Activated T-helper 2 cell treated with anti-CD3 and anti-CD28 coated beads, Interferon-gamma antibody, Interleukin-2, Interleukin-4, amounts not matched to agents 10 μg/mL and 5 μg/mL and 100 μg/mL, durations not matched to agents 14 hours and 24 hours and 36 hours (primary cell): ENCODE measurements at regions of chr5 and their contacts with region 1.

Region 1: DNA sequence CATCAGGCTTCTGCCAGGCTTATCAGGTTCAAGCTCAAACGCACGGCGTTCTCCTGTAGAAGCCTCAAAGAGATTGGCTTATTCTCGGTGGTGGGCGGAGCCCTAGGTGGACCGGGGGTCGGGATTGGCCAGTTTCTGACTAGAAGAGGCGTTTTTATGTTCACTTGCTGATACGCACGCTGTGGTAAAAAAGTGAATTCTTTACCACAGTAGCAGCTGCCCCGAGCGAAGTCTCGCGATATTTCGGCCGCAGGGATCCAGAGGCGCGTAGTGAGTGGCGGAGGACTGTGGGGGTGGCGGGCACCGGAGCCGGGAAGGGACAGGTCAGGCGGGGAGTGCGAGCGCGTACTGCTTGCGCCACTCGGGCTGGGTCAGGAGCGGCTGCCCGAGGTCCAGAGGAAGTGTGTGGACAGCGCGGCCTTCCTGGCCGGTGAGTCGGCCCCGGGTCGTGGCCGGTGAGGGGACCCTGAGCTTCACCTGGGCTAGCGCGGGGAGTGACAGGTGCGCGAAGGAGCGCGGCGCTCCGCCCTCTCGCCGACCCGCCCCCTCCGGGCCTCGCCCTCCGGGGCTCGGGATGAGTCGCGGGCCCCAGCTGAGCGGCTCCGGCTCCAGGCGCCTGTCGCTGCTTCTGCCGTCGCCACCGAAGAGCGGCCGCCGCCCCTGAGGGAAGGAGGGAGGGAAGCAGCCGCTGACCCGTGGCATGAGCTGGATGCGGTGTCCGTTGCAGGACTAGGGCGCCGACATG is at the start of gene DMXL1:
- DNase-seq: peak; percentile 97
- H3K4me3 Mint-ChIP-seq: peak within 1 kb of the TSS; percentile 98
- H3K27ac Mint-ChIP-seq: peak within 1 kb of the TSS; percentile 99
- H3K4me1 Mint-ChIP-seq: peaks cover 33% of the 10 kb centered on the region
- H3K27me3 Mint-ChIP-seq: no peaks in the 10 kb centered on the region
- total RNA-seq, gene DMXL1: 26.7 and 29.3 TPM in 2 replicates

Region 2: GRCh38 chr5:119031905-119032304 is 39.1 kb before region 1 on chr5:
- intact Hi-C with region 1: loop called (anchors 2 kb)
- DNase-seq: no peak
- H3K4me3 Mint-ChIP-seq: peak overlapping the region; percentile 3
- H3K27ac Mint-ChIP-seq: peak overlapping the region; percentile 58
- H3K4me1 Mint-ChIP-seq: peaks cover 25% of the 10 kb centered on the region
- H3K27me3 Mint-ChIP-seq: no peaks in the 10 kb centered on the region

Region 3: DNA sequence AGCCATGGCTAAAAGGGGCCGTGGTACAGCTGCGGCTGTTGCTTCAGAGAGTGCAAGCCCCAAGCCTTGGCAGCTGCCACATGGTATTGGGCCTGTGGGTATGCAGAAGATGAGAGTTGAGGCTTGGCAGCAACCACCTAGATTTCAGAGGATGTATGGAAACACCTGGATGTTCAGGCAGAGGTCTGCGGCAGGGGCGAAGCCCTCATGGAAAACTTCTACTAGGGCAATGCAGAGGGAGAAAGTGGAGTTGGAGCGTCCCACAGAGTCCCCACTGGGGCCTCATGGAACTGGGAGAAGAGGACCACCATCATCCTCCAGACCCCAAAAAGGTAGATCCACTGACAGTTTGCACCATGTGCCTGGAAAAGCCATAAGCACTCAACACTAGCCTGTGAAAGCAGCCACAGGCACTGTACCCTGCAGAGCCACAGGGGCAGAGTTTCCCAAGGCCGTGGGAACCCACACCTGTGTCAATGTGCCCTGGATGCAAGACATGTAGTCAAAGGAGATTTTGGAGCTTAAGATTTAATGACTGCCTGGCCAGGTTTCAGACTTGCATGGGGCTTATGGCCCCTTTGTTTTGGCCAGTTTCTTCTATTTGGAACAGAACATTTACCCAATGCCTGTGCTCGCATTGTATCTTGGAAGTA is 65.8 kb after region 1 on chr5:
- intact Hi-C with region 1: no loop called
- DNase-seq: no peak
- H3K4me3 Mint-ChIP-seq: no peak overlapping the region
- H3K27ac Mint-ChIP-seq: no peak overlapping the region
- H3K4me1 Mint-ChIP-seq: no peaks in the 10 kb centered on the region
- H3K27me3 Mint-ChIP-seq: no peaks in the 10 kb centered on the region

Region 4: GRCh38 chr5:119267958-119268386 is 197.0 kb after region 1 on chr5:
- intact Hi-C with region 1: loop called (anchors 1 kb)
- DNase-seq: peak; percentile 70
- H3K4me3 Mint-ChIP-seq: peak overlapping the region; percentile 99
- H3K27ac Mint-ChIP-seq: peak overlapping the region; percentile 95
- H3K4me1 Mint-ChIP-seq: peaks cover 51% of the 10 kb centered on the region
- H3K27me3 Mint-ChIP-seq: no peaks in the 10 kb centered on the region

Region 5: DNA sequence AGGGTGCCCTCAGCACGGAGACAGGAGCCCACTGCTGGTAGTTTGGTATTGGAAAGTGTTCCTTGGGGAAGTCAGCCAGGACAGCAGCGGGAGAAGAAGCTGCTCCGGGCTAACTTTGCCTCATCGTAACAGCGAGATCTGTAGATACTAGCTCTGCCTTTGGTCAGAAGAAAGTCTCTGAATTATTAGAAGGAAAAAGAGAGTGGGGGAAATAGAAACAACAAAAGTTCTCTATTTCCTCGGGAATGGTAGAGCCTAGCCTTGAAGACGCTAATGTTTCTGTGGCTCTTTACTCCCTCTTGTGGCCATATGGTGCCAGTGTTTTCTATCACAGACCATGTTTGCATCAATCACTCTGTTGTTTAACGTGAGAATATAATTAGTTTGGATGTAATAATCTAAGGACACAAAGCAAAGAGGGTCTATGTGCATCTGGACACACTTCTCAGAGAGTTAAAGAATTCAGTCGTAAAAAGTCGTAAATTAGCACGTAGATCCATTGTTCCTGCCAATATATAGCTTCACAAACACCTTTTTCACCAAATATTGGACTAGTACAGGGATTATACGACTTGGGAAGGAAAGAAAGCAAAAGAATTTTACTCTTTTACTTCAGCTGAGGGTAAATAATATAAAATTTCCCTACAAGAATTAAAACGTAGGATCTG is 341.1 kb after region 1 on chr5:
- intact Hi-C with region 1: loop called (anchors 5 kb)
- DNase-seq: peak; percentile 38
- H3K4me3 Mint-ChIP-seq: peak overlapping the region; percentile 83
- H3K27ac Mint-ChIP-seq: peak overlapping the region; percentile 42
- H3K4me1 Mint-ChIP-seq: peaks cover 36% of the 10 kb centered on the region
- H3K27me3 Mint-ChIP-seq: peaks cover 9% of the 10 kb centered on the region

Region 6: GRCh38 chr5:119452373-119453039 is 381.5 kb after region 1 on chr5 and contains the start of gene HSD17B4:
- intact Hi-C with region 1: loop called (anchors 2 kb)
- DNase-seq: peak; percentile 71
- H3K4me3 Mint-ChIP-seq: peak within 1 kb of the TSS; percentile 94
- H3K27ac Mint-ChIP-seq: peak within 1 kb of the TSS; percentile 88
- H3K4me1 Mint-ChIP-seq: peaks cover 17% of the 10 kb centered on the region
- H3K27me3 Mint-ChIP-seq: peaks cover 10% of the 10 kb centered on the region
- total RNA-seq, gene HSD17B4: 81.1 and 88.1 TPM in 2 replicates